ENCODE measurements at regions of chr12 and their contacts with region 1.

Region 1: GRCh38 chr12:389139-390096 is at the start of gene KDM5A:
- DNase-seq: peak; percentile 85
- ATAC-seq: peak; percentile 91
- H3K4me3 ChIP-seq: peak within 1 kb of the TSS; percentile 93
- H3K27ac ChIP-seq: peak within 1 kb of the TSS; percentile 81
- H3K4me1 ChIP-seq: peaks cover 14% of the 10 kb centered on the region
- H3K27me3 ChIP-seq: no peaks in the 10 kb centered on the region
- CTCF ChIP-seq: no peak
- total RNA-seq, gene KDM5A: 27.8 and 34.0 TPM in 2 replicates

Region 2: GRCh38 chr12:332581-333205 is 56.7 kb before region 1 on chr12:
- CTCF ChIA-PET with region 1: no interaction called
- POLR2A ChIA-PET with region 1: no interaction called
- intact Hi-C with region 1: no loop called
- DNase-seq: no peak
- ATAC-seq: no peak
- H3K4me3 ChIP-seq: no peak overlapping the region
- H3K27ac ChIP-seq: no peak overlapping the region
- H3K4me1 ChIP-seq: no peaks in the 10 kb centered on the region
- H3K27me3 ChIP-seq: no peaks in the 10 kb centered on the region
- CTCF ChIP-seq: no peak

Region 3: DNA sequence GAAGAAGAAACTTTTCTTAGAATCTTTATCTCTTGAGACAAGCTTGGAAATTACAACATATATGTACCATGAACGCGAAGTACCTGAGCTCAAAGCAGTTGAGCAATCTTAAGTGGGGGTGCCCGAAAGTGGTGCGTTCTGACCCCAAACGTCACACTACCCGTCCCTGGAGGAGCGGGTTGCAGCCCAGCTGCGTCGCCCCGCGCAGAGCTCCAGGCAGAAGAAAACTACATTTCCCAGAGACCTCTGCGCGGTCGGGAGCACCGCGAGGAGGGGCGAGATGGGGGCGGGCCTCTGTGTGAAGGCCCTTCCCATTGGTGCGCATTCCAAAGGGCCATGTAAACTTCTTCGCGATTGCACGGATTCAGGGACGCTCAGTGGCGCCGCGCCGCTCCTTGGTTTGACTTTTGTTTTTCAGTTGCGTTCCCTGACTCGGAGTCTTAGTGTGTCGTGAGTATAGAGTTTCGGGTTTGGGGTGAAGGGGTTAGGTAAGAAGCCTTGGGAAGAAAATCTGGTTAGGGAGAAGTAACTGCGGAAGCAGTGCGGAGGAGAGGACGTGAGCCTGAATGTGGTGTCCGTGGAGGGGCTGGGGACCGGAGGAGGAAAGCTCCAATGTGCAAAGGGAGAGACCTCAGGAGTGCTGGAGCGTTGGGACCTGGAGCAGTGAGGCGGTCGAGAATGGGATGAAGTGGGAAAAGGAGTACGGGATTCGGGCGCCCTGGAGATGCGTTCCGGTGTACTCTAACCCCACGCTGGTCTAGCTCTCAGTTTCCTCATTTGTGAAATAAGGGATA is 12.0 kb after region 1 on chr12 and contains the start of gene CCDC77:
- CTCF ChIA-PET with region 1: no interaction called
- POLR2A ChIA-PET with region 1: interaction called, 10 read pairs
- intact Hi-C with region 1: loop called (anchors 1 kb)
- DNase-seq: peak; percentile 95
- ATAC-seq: peak; percentile 100
- H3K4me3 ChIP-seq: peak within 1 kb of the TSS; percentile 88
- H3K27ac ChIP-seq: no peak within 1 kb of the TSS; the same call in 1 of the 2 replicates
- H3K4me1 ChIP-seq: peaks cover 14% of the 10 kb centered on the region; the same call in 1 of the 2 replicates
- H3K27me3 ChIP-seq: no peaks in the 10 kb centered on the region
- CTCF ChIP-seq: no peak
- total RNA-seq, gene CCDC77: 8.3 and 10.5 TPM in 2 replicates

Region 4: GRCh38 chr12:563250-563781 is 173.9 kb after region 1 on chr12:
- CTCF ChIA-PET with region 1: no interaction called
- POLR2A ChIA-PET with region 1: no interaction called
- intact Hi-C with region 1: no loop called
- DNase-seq: no peak
- ATAC-seq: no peak
- H3K4me3 ChIP-seq: no peak overlapping the region
- H3K27ac ChIP-seq: no peak overlapping the region
- H3K4me1 ChIP-seq: no peaks in the 10 kb centered on the region
- H3K27me3 ChIP-seq: no peaks in the 10 kb centered on the region
- CTCF ChIP-seq: no peak